Activated CD4-positive, alpha-beta T cell treated with anti-CD3 and anti-CD28 coated beads, Interleukin-2, amount 10 ng/mL, durations not matched to agents 24 days and 14 days (primary cell): ENCODE measurements at regions of chr1 and their contacts with region 1.

Region 1: GRCh38 chr1:180252638-180253536 is 22.8 kb downstream of the LHX4 start:
- DNase-seq: peak; percentile 93
- H3K4me3 Mint-ChIP-seq: no peak overlapping the region
- H3K27ac Mint-ChIP-seq: no peak overlapping the region
- H3K4me1 Mint-ChIP-seq: peaks cover 7% of the 10 kb centered on the region
- H3K27me3 Mint-ChIP-seq: no peaks in the 10 kb centered on the region

Region 2: GRCh38 chr1:180415985-180416633 is 163.2 kb after region 1 on chr1:
- intact Hi-C with region 1: loop called (anchors 1 kb)
- DNase-seq: no peak
- H3K4me3 Mint-ChIP-seq: no peak overlapping the region
- H3K27ac Mint-ChIP-seq: no peak overlapping the region
- H3K4me1 Mint-ChIP-seq: no peaks in the 10 kb centered on the region
- H3K27me3 Mint-ChIP-seq: no peaks in the 10 kb centered on the region

Region 3: DNA sequence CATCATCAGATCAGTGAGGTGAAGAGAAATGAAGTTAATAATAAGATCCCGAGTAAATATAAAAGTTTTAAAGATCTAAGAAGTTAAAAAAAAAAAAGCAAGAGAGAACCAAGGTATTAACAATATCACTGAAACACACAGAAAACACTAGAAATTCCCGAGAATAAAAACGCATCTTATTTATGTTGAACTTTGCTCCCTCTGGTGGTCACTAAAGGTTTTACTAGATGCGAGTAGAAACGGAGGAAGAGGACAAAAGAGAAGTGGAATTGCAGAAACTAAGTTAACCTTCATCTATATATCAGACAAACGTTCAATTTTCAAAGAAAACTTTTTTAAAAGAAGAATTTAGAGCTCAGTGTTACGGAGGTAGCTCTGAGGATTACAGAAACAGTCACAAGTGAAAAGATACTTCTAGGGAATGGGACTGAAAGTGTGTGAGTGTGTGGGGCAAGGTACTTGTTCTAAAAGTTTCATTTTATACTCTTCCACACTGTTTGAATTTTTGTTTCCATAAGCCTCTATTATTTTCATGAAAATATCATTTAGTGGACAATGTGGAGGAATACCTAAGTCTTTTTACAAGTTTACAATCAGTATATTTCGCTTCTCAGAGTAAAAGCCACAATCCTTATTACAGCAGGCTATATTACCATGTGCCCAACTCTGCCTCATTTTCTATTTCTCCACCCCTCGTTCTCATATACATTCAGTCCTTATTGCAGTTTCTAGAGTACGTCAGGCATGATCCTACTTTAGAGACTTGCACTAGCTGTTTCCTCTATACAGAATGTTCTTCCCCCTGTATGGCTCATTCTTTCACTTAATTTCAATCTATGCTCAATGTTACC is 229.8 kb after region 1 on chr1:
- intact Hi-C with region 1: loop called (anchors 1 kb)
- DNase-seq: peak; percentile 72
- H3K4me3 Mint-ChIP-seq: no peak overlapping the region
- H3K27ac Mint-ChIP-seq: no peak overlapping the region
- H3K4me1 Mint-ChIP-seq: peaks cover 16% of the 10 kb centered on the region
- H3K27me3 Mint-ChIP-seq: no peaks in the 10 kb centered on the region